Activated CD8-positive, alpha-beta T cell treated with anti-CD3 and anti-CD28 coated beads, Interleukin-2, amount 10 ng/mL, durations not matched to agents 7 days and 5 days (primary cell): ENCODE measurements at regions of chr3 and their contacts with region 1.

Region 1: DNA sequence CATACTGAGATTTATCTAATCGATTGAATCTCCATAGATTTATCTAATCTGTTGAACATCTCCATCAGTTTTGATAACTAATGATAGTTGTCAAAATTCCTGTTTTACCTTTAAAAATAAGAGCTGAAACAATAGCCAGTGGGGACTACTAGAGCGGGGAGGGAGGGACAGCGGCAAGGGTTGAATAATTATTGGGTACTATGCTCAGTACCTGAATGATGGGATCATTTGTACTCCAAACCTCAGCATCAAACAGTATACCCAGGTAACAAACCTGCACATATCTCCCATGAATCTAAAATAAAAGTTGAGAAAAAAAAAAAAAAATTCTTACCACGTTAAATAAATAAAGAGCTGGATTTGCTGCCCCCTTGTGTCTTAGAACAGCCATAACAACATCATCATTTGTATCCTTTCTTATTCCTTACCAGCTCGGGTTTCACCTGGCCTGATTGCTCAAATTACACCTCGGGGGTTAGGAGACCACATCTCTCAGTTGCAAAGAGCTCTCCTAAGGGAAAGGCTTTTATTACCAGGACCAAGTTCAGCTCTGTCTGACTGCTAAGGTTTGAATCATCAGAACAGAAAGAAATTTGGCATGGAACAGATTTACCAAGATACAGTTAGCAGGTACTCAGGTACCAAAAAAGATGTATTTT is 25.7 kb upstream of the RPL39L start:
- DNase-seq: peak; percentile 63
- ATAC-seq: peak; percentile 47
- H3K4me3 Mint-ChIP-seq: no peak overlapping the region
- H3K27ac Mint-ChIP-seq: no peak overlapping the region
- H3K4me1 Mint-ChIP-seq: peaks cover 4% of the 10 kb centered on the region
- H3K27me3 Mint-ChIP-seq: peaks cover 36% of the 10 kb centered on the region

Region 2: GRCh38 chr3:186882881-186883685 is 281.9 kb before region 1 on chr3:
- CTCF ChIA-PET with region 1: no interaction called
- POLR2A ChIA-PET with region 1: no interaction called
- DNase-seq: peak; percentile 24
- ATAC-seq: peak; percentile 62
- H3K4me3 Mint-ChIP-seq: no peak overlapping the region
- H3K27ac Mint-ChIP-seq: peak overlapping the region; percentile 5
- H3K4me1 Mint-ChIP-seq: peaks cover 43% of the 10 kb centered on the region
- H3K27me3 Mint-ChIP-seq: no peaks in the 10 kb centered on the region

Region 3: DNA sequence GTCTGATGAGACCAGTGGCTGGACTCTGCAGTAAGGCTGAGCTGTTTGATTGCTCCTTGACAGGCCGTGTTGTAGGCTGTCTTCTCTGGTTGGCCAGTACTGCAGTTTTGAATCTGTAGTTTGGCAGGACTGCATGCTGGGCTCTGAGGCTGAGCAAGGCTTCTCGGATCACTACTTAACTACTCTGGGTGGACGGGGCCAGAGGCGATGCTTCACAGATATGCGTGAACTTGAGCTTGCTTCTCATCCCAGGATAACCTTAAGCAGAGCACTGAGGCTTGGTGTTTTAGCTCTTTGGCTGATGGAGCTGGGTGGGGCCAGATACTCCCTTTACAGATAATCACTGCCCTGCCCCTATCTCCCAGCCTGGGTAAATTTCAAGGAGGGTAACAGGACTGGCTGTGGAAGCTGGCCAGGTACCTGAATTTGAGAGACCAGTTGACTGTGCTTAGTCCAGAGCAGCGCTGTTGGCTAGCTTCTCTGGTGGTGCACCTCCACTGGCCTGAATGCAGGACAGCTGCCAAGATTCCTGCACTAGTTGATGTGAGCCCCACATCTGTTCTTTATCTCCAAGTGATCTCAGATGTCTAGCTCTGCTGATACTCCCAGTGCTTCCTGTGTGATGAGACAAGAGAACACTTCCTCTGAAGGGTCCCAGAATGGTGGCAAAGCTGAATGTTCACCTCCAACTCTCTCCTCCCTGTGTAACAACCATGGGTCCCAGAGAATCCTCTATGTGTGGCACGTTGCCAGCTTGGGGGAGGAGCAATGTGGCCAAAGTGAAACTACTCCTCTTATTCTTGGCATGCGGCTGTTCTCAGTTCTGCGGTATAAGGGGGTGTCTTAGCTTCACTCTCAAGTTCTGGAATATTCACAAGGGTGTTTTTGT is 63.6 kb before region 1 on chr3:
- CTCF ChIA-PET with region 1: interaction called, 19 read pairs
- POLR2A ChIA-PET with region 1: no interaction called
- DNase-seq: peak; percentile 70
- ATAC-seq: peak; percentile 81
- H3K4me3 Mint-ChIP-seq: peak overlapping the region; percentile 32
- H3K27ac Mint-ChIP-seq: peak overlapping the region; percentile 74
- H3K4me1 Mint-ChIP-seq: peaks cover 35% of the 10 kb centered on the region
- H3K27me3 Mint-ChIP-seq: no peaks in the 10 kb centered on the region

Region 4: GRCh38 chr3:187130346-187131066 is 34.5 kb before region 1 on chr3:
- CTCF ChIA-PET with region 1: interaction called, 10 read pairs
- POLR2A ChIA-PET with region 1: no interaction called
- DNase-seq: peak; percentile 64
- ATAC-seq: peak; percentile 99
- H3K4me3 Mint-ChIP-seq: peak overlapping the region; percentile 65
- H3K27ac Mint-ChIP-seq: peak overlapping the region; percentile 94
- H3K4me1 Mint-ChIP-seq: peaks cover 38% of the 10 kb centered on the region
- H3K27me3 Mint-ChIP-seq: no peaks in the 10 kb centered on the region

Region 5: GRCh38 chr3:187215460-187215859 is 50.4 kb after region 1 on chr3:
- CTCF ChIA-PET with region 1: no interaction called
- POLR2A ChIA-PET with region 1: no interaction called
- DNase-seq: no peak
- ATAC-seq: no peak
- H3K4me3 Mint-ChIP-seq: no peak overlapping the region
- H3K27ac Mint-ChIP-seq: no peak overlapping the region
- H3K4me1 Mint-ChIP-seq: no peaks in the 10 kb centered on the region
- H3K27me3 Mint-ChIP-seq: peaks cover 15% of the 10 kb centered on the region